HAP-1 (cell line): ENCODE measurements at regions of chr1 and their contacts with region 1.

Region 1: GRCh38 chr1:18902523-18903290 is at the start of gene ALDH4A1:
- DNase-seq: peak; percentile 94 to 97
- H3K4me3 ChIP-seq: peak within 1 kb of the TSS; percentile 71
- H3K4me1 ChIP-seq: peaks cover 4% of the 10 kb centered on the region
- H3K27me3 ChIP-seq: no peaks in the 10 kb centered on the region

Region 2: DNA sequence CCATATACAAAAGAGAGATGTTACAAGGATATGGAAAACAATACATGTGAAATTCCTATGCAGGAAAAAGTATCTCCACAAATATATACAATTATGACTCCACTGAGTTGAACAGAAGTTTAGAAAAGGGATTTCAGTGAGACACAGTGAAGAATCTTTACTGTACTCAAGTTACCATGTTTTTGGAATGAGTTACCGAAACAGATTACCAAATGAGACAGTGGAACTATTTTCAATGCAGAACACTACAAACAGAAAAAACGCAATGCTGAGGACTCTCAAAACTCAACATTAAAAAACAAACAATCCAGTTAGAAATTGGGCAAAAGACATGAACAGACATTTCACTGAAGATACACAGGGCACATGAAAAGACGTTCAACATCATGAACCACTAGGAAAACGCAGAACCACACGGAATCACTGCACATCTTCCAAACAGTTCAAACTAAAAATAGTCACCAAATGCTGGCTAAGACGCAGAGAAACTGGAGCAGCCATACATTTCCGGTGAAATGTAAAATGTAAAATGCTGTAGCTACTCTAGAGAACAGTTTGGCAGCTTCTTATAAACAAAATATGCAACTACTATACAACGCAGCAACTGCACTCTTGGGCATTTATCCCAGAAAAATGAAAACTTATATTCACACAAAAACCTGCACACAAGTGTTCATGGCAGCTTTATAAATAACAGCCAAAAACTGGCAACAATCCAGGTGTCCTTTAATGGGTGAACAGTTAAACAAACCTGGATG is 188.7 kb after region 1 on chr1:
- in situ Hi-C with region 1: loop called (anchors 5 kb)
- DNase-seq: no peak
- H3K4me3 ChIP-seq: no peak overlapping the region
- H3K4me1 ChIP-seq: peaks cover 7% of the 10 kb centered on the region
- H3K27me3 ChIP-seq: no peaks in the 10 kb centered on the region

Region 3: DNA sequence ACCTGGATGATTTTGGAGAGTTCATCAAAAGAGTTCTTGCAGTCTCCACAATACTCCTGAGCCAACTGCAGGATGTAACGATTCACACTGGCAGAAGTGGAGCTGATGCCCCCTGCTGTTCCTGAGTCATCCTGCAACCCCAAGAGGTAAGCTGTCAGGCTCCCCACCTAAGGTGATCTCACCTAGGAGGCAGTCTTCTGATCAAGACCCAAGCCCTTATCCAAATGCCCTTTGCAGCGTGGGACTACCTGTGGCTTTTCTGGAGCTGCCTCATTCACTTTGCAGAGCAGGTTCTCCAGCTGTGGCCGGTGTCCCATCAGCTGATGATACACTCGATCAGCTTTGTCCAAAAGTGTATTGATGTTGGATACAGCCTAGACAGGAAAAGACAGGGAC is 211.0 kb after region 1 on chr1:
- in situ Hi-C with region 1: no loop called
- DNase-seq: peak in 1 of 2 experiments; percentile 35
- H3K4me3 ChIP-seq: no peak overlapping the region
- H3K4me1 ChIP-seq: no peaks in the 10 kb centered on the region
- H3K27me3 ChIP-seq: no peaks in the 10 kb centered on the region

Region 4: GRCh38 chr1:19179597-19180264 is 277.0 kb after region 1 on chr1:
- in situ Hi-C with region 1: no loop called
- DNase-seq: peak in 1 of 2 experiments; percentile 17
- H3K4me3 ChIP-seq: no peak overlapping the region
- H3K4me1 ChIP-seq: no peaks in the 10 kb centered on the region
- H3K27me3 ChIP-seq: no peaks in the 10 kb centered on the region